Kidney (tissue), 22 donors: ENCODE measurements at regions of chr18 and their contacts with region 1.

Region 1: DNA sequence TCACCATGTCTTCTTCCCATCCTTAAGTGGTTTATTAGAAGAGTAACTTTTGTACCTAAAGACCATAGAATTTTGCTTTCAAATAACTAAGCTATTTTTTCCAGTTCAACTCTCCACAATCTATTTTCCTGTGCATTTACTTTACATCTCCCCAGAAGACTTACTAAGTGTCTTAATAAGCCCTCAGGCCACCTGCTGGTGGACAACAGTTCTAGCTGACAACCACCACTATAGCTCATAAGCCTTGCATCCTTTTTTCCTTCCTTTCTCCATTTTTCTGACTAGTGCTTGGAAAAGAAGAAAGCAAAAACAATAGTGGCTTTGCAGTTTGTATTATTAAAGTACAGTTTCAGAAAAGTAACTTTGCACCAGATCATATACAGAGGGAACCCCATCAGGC is 149.5 kb upstream of the TMEM200C start:
- DNase-seq: no peak
- H3K4me3 ChIP-seq: no peak overlapping the region
- H3K27ac ChIP-seq: no peak overlapping the region
- H3K4me1 ChIP-seq: no peaks in the 10 kb centered on the region
- H3K27me3 ChIP-seq: no peaks in the 10 kb centered on the region
- CTCF ChIP-seq: no peak

Region 2: DNA sequence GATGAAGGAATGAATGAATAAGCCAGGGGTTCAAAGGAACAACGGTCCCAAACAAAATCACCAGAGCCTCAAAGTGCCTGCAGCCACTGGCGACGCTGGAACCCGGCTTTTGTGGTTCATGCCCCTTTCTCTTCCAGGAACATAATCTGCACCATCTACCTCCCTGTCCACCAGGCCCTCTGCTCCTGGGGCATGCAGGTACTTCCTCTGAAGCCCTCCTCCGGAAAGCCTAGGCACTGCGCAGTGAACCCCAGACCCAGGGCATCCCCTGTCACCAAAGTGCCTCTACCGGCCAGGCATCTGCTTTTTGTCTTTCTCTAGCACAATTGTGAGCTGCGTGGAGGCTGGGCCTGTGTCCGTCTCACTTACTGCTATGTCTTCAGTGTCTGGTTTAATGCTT is 50.8 kb before region 1 on chr18:
- intact Hi-C with region 1: loop called (anchors 5 kb)
- DNase-seq: no peak
- H3K4me3 ChIP-seq: no peak overlapping the region
- H3K27ac ChIP-seq: no peak overlapping the region
- H3K4me1 ChIP-seq: peaks cover 0 to 11% (median 0%) of the 10 kb centered on the region in 3 donors
- H3K27me3 ChIP-seq: no peaks in the 10 kb centered on the region
- CTCF ChIP-seq: no peak